CD8-positive, alpha-beta memory T cell (primary cell): ENCODE measurements at regions of chr6 and their contacts with region 1.

Region 1: GRCh38 chr6:29834564-29835436 is 7.2 kb downstream of the HLA-G start:
- DNase-seq: peak; percentile 34 to 73 (median 49)
- H3K4me3 ChIP-seq: no peak overlapping the region
- H3K4me3 Mint-ChIP-seq: no peak overlapping the region
- H3K27ac ChIP-seq: no peak overlapping the region
- H3K27ac Mint-ChIP-seq: no peak overlapping the region
- H3K4me1 ChIP-seq: no peaks in the 10 kb centered on the region
- H3K4me1 Mint-ChIP-seq: peaks cover 0 to 3% (median 0%) of the 10 kb centered on the region in 3 donors
- H3K27me3 ChIP-seq: peaks cover 23% of the 10 kb centered on the region
- H3K27me3 Mint-ChIP-seq: peaks cover 49 to 76% of the 10 kb centered on the region in 2 donors

Region 2: GRCh38 chr6:29737707-29738630 is 96.8 kb before region 1 on chr6:
- CTCF ChIA-PET with region 1: interaction called, 36 read pairs
- POLR2A ChIA-PET with region 1: interaction called, 4 read pairs
- DNase-seq: peak; percentile 48 to 82 (median 63)
- H3K4me3 ChIP-seq: no peak overlapping the region
- H3K4me3 Mint-ChIP-seq: no peak overlapping the region
- H3K27ac ChIP-seq: no peak overlapping the region
- H3K27ac Mint-ChIP-seq: peak overlapping the region in 1 of 8 donors; percentile 33
- H3K4me1 ChIP-seq: no peaks in the 10 kb centered on the region
- H3K4me1 Mint-ChIP-seq: peaks cover 6 to 22% (median 12%) of the 10 kb centered on the region in 3 donors
- H3K27me3 ChIP-seq: no peaks in the 10 kb centered on the region
- H3K27me3 Mint-ChIP-seq: no peaks in the 10 kb centered on the region

Region 3: GRCh38 chr6:29887819-29888776 is 53.3 kb after region 1 on chr6:
- CTCF ChIA-PET with region 1: no interaction called
- POLR2A ChIA-PET with region 1: no interaction called
- DNase-seq: peak; percentile 82 to 94 (median 89)
- H3K4me3 ChIP-seq: peak overlapping the region; percentile 62
- H3K4me3 Mint-ChIP-seq: peak overlapping the region in 6 of 7 donors; percentile 85 to 97 (median 88)
- H3K27ac ChIP-seq: peak overlapping the region; percentile 74
- H3K27ac Mint-ChIP-seq: peak overlapping the region in 7 of 8 donors; percentile 94 to 99 (median 97)
- H3K4me1 ChIP-seq: peaks cover 4% of the 10 kb centered on the region
- H3K4me1 Mint-ChIP-seq: peaks cover 5 to 37% (median 10%) of the 10 kb centered on the region in 3 donors
- H3K27me3 ChIP-seq: no peaks in the 10 kb centered on the region
- H3K27me3 Mint-ChIP-seq: no peaks in the 10 kb centered on the region